Posterior vena cava (tissue), 2 donors: ENCODE measurements at regions of chr7 and their contacts with region 1.

Region 1: GRCh38 chr7:15305002-15305600 is 256.7 kb downstream of the AGMO start:
- DNase-seq: no peak

Region 2: DNA sequence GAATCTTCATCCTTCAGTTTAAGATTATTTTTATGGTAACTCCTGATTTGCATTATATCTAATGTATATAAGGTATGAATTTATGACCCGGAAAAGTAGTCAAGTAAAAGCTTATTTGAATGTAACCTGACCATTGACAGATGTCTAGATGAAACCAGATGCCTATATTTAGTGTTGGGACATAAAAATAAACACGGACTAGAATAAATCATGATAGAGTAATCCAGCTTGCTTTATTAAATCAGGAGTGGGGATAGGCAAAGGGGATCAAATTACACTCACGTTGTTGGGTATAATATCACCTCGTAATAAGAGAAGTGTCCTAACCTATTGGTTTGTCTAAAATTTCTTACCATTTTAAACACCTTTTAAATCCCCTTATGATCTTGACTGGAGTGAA is 12.1 kb after region 1 on chr7:
- intact Hi-C with region 1: no loop called
- DNase-seq: no peak

Region 3: DNA sequence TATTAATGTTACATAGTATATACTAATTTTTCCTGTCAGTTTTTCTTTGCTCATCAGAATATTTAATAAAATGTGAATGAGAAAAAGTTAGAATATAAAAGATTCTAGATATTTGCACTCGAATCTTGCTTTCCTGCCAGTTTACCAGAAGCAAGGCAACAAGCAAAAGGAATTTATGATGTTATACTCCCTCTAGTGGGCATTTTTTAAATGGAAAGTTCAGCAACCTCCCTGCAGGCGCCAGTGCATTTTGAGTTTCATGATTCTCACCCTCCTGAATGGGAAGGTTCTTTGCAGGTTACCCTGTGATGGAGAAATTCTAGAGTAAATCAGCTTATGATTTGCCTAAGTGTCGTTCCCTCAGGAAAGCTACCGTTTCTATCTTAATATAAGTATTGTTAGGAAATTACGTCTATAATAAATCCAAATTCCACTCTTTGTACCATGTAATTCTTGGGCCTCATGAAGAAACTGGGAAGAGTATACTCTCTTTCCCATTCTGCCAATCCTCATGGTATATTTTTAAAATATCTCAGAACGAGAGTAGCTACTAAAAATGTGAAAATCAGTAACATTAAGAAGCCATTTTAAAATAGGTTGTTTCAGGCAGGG is 766.3 kb after region 1 on chr7:
- intact Hi-C with region 1: loop called in 1 of 2 experiments (anchors 10 kb)
- DNase-seq: no peak

Region 4: GRCh38 chr7:16083931-16084330 is 778.8 kb after region 1 on chr7:
- intact Hi-C with region 1: loop called (anchors 10 kb)
- DNase-seq: no peak